OCI-LY7 (cell line): ENCODE measurements at regions of chr4 and their contacts with region 1.

Region 1: DNA sequence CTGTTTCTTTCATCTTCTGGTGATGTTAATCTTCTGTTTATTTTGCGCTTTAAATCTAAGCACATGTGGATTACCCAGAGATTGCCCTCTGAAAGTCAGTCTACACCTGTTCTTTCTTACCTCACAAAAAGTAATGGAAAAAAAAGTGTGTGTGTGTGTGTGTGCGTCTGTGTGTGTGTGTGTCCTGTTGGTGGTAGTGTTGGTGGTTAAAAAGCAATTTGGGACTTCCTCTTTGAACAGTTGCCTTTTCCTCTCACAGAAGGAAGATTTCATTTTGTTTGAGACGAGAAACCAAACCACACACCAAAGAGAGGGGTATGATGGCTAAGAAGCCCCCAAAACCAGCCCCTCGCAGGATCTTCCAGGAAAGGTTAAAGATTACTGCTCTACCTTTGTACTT is at the start of gene STAP1:
- DNase-seq: peak; percentile 92
- H3K4me3 ChIP-seq: peak within 1 kb of the TSS; percentile 88
- H3K27ac ChIP-seq: peak within 1 kb of the TSS; percentile 83
- H3K4me1 ChIP-seq: peaks cover 56% of the 10 kb centered on the region
- CTCF ChIP-seq: peak; percentile 46; the same call in 1 of the 2 replicates
- total RNA-seq, gene STAP1: 88.4 and 91.1 TPM in 2 replicates

Region 2: GRCh38 chr4:67568820-67569219 is 10.3 kb after region 1 on chr4:
- CTCF ChIA-PET with region 1: interaction called, 3 read pairs
- POLR2A ChIA-PET with region 1: interaction called, 21 read pairs
- intact Hi-C with region 1: no loop called
- DNase-seq: no peak
- H3K4me3 ChIP-seq: no peak overlapping the region
- H3K27ac ChIP-seq: no peak overlapping the region
- H3K4me1 ChIP-seq: peaks cover 62% of the 10 kb centered on the region
- CTCF ChIP-seq: no peak

Region 3: GRCh38 chr4:67796810-67797209 is 238.3 kb after region 1 on chr4:
- CTCF ChIA-PET with region 1: no interaction called
- POLR2A ChIA-PET with region 1: no interaction called
- intact Hi-C with region 1: no loop called
- DNase-seq: no peak
- H3K4me3 ChIP-seq: no peak overlapping the region
- H3K27ac ChIP-seq: no peak overlapping the region
- H3K4me1 ChIP-seq: no peaks in the 10 kb centered on the region
- CTCF ChIP-seq: no peak